Cardiac septum (tissue), 1 donor: ENCODE measurements at regions of chr2 and their contacts with region 1.

Region 1: DNA sequence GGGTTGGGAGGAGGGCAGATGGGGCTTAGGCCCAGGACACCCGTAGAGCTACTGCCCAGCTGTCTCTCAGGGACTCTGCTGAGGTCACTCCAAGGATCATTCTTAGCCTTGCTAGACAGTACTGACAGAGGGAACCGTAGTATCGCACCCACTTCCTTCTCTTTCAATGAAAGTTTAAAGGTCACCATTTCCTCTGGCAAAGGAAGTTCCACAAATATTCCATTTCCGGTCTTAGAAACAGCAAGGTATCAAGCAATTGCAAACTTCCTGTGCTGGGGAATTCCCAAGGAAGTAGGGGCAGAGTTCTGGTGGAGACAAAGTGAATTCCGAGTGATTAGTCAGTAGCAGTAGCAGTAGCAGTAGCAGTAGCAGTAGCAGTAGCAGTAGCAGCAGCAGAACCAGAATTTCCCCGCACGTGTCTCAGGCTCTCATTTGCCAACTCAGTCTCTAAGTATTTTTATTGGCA is 24.7 kb downstream of the IL1B start:
- DNase-seq: no peak

Region 2: DNA sequence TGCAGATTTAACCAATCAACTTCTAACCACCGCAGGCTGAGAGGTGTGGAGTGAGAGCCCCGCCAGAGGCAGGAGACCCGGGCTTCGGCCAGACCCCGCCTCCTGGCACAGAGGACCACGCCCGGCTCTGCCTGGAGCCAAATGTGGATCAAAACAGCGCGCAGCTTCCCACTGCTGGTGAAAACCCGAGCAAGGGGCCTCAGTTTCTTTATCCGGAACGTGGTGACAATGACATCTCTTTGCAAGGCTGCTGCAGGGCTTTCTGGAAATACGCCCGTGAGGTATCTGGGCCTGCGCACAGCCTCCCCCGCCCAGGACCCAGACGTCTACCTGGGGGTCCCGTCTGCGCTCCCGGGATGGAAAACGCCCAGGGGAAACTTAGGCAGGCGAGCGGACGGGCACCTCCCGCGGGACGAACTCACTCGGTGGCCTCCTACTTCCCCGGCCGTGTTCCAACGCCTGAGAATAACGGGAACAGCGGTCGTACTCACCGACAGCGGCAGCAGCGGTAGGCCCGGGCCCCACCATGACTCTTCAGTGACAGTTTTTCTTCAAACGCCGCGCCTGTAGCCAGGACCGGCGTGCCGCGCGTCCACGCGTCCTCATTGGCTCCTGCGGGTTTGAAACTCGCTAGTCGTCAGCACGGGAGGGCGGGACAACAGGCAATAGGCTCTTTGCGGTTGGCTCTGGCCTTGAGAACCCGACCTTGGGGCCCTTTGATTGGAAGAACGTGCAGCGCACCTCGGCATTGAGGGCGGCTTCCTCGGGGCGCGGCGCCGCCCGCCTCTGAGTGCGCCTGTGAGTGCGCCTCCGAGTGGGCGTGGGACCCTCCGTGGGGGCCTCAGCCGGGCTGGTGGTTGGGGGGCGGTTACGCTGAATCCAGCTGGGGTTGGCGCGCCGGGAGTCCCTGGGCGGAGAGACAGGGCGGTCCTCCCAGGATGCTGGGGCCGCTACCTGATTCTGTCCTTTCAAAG is 47.5 kb before region 1 on chr2 and contains the start of gene CKAP2L:
- intact Hi-C with region 1: loop called (anchors 5 kb)
- DNase-seq: peak; percentile 99
- total RNA-seq, gene CKAP2L: 0.30 TPM

Region 3: DNA sequence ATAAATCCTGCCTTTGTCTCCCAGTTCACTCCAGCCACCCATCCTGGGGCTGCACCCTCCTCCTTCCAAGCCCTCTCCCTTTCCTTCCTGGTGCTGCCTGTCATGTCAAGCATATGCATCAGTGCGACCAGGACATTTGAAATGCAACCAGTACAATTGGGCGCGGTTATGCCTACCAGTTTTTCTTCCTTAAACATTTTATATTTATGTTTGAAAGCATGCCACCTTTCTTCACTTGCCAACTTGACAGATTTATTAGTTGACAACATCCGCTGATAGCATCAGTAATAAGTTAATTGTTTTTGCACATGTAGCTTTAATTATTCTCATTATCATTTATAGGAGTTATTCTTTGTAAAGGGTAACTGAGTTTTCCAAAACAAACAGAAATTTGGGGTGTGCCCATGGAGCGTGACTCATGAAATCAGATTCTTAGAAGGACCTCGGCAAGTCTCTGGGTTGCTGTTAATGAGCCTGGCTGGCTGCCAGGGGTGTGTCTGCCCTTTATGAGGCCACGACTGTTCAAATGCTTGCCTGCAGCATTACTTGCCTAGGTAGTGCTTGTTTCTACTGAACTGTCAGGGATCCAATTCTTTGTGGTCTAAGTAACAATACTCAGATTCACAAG is 57.5 kb after region 1 on chr2:
- intact Hi-C with region 1: loop called (anchors 2 kb)
- DNase-seq: peak; percentile 87

Region 4: DNA sequence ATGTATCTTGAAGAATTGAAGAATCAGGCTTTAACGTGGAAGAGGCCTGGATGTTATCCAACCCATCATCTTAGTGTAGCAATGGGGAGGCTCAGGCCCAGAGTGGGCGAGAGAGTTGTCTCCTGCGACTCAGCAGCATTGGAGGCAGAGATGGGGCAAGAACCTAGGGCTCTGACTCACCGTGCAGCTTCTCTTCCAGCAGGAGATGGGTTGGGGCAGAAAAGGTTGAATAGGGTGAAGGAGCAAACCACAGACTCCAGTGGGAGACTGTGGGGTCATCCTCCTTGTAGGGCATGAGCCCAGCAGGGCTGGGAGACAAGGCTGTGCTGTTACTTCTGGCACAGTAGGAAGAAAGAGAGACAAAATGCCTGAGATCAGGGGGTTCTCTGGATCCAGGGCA is 248.5 kb after region 1 on chr2:
- intact Hi-C with region 1: no loop called
- DNase-seq: no peak

Region 5: GRCh38 chr2:113157118-113157896 is 345.4 kb after region 1 on chr2:
- intact Hi-C with region 1: no loop called
- DNase-seq: no peak